Testis (tissue), 5 donors: ENCODE measurements at regions of chr12 and their contacts with region 1.

Region 1: GRCh38 chr12:113196996-113197395 is 11.5 kb downstream of the RITA1 start:
- DNase-seq: peak; percentile 82
- H3K4me3 ChIP-seq: no peak overlapping the region
- H3K27ac ChIP-seq: no peak overlapping the region
- H3K4me1 ChIP-seq: peaks cover 17% of the 10 kb centered on the region
- H3K27me3 ChIP-seq: no peaks in the 10 kb centered on the region
- CTCF ChIP-seq: peak; percentile 18 to 66 (median 46)
- POLR2A ChIP-seq: no peak

Region 2: GRCh38 chr12:113439606-113440030 is 242.6 kb after region 1 on chr12:
- intact Hi-C with region 1: loop called (anchors 10 kb)
- DNase-seq: peak; percentile 72
- H3K4me3 ChIP-seq: no peak overlapping the region
- H3K27ac ChIP-seq: no peak overlapping the region
- H3K4me1 ChIP-seq: no peaks in the 10 kb centered on the region
- H3K27me3 ChIP-seq: no peaks in the 10 kb centered on the region
- CTCF ChIP-seq: peak in 2 of 3 experiments; percentile 35 to 52
- POLR2A ChIP-seq: no peak